ENCODE measurements at regions of chr22 and their contacts with region 1.

Region 1: GRCh38 chr22:21839765-21840140 is 27.7 kb downstream of the MAPK1 start:
- DNase-seq: no peak
- ATAC-seq: no peak
- H3K4me3 ChIP-seq: no peak overlapping the region
- H3K4me3 Mint-ChIP-seq: no peak overlapping the region
- H3K27ac ChIP-seq: no peak overlapping the region
- H3K27ac Mint-ChIP-seq: peak overlapping the region; percentile 80 to 84
- H3K4me1 ChIP-seq: peaks cover 29% of the 10 kb centered on the region
- H3K4me1 Mint-ChIP-seq: peaks cover 74 to 79% of the 10 kb centered on the region in 2 donors
- H3K27me3 ChIP-seq: no peaks in the 10 kb centered on the region
- H3K27me3 Mint-ChIP-seq: no peaks in the 10 kb centered on the region
- CTCF ChIP-seq: no peak

Region 2: GRCh38 chr22:21582801-21583740 is 256.7 kb before region 1 on chr22:
- intact Hi-C with region 1: no loop called
- DNase-seq: no peak
- ATAC-seq: no peak
- H3K4me3 ChIP-seq: no peak overlapping the region
- H3K4me3 Mint-ChIP-seq: no peak overlapping the region
- H3K27ac ChIP-seq: no peak overlapping the region
- H3K27ac Mint-ChIP-seq: peak overlapping the region; percentile 4 to 10
- H3K4me1 ChIP-seq: peaks cover 51% of the 10 kb centered on the region
- H3K4me1 Mint-ChIP-seq: peaks cover 45 to 53% of the 10 kb centered on the region in 2 donors
- H3K27me3 ChIP-seq: no peaks in the 10 kb centered on the region
- H3K27me3 Mint-ChIP-seq: no peaks in the 10 kb centered on the region
- CTCF ChIP-seq: no peak

Region 3: GRCh38 chr22:21857481-21857914 is 17.7 kb after region 1 on chr22:
- intact Hi-C with region 1: loop called (anchors 2 kb)
- DNase-seq: no peak
- ATAC-seq: peak; percentile 21 to 34 (median 28)
- H3K4me3 ChIP-seq: no peak overlapping the region
- H3K4me3 Mint-ChIP-seq: peak overlapping the region; percentile 43
- H3K27ac ChIP-seq: peak overlapping the region; percentile 5
- H3K27ac Mint-ChIP-seq: peak overlapping the region; percentile 87 to 90
- H3K4me1 ChIP-seq: peaks cover 46% of the 10 kb centered on the region
- H3K4me1 Mint-ChIP-seq: peaks cover 87 to 92% of the 10 kb centered on the region in 2 donors
- H3K27me3 ChIP-seq: no peaks in the 10 kb centered on the region
- H3K27me3 Mint-ChIP-seq: no peaks in the 10 kb centered on the region
- CTCF ChIP-seq: no peak